Caco-2 (cell line): ENCODE measurements at regions of chr10 and their contacts with region 1.

Region 1: DNA sequence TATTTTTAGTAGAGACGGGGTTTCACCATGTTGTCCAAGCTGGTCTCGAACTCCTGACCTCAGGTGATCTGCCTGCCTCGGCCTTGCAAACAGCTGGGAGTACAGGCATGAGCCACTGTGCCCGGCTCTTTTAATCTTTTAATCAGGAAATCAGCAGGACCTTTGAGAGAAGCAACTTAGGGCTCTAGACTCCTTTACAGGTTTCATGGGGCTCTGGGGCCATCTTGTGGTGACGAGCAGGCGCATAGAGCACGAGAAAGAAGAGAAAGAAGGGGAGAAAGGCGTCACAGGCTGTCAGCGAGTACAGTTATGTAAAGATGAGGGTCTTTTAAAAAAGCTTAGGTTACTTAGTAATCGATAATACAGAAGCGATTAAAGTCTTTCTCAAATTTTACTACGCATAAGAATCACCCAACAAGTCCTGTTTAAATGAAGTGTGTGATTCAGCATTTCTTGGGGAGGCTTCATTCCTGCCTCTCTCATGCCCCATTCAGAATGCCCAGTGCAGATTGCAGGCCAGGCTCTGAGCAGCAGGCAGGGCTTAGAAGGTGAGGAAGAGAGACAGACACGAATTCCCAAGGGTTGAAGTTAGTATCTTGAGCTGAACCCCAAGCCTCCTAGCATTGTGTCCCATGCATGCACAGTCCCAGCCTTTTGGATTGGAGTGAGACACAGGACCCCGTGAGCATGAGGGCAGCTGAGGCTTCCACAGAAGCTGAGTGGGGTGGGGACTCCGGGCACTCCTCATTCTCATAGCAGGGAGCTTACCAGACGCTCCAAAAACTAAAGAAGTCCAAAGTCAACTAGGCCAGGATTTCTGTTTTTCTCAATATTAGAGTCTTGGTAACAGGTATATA is 23.6 kb upstream of the PFKP start:
- DNase-seq: peak; percentile 81
- H3K4me3 ChIP-seq: no peak overlapping the region
- H3K4me3 Mint-ChIP-seq: no peak overlapping the region
- H3K27ac Mint-ChIP-seq: no peak overlapping the region
- H3K4me1 ChIP-seq: peaks cover 22% of the 10 kb centered on the region
- H3K4me1 Mint-ChIP-seq: peaks cover 17% of the 10 kb centered on the region
- H3K27me3 ChIP-seq: no peaks in the 10 kb centered on the region
- H3K27me3 Mint-ChIP-seq: peaks cover 2% of the 10 kb centered on the region
- CTCF ChIP-seq: peak; percentile 89 to 95

Region 2: DNA sequence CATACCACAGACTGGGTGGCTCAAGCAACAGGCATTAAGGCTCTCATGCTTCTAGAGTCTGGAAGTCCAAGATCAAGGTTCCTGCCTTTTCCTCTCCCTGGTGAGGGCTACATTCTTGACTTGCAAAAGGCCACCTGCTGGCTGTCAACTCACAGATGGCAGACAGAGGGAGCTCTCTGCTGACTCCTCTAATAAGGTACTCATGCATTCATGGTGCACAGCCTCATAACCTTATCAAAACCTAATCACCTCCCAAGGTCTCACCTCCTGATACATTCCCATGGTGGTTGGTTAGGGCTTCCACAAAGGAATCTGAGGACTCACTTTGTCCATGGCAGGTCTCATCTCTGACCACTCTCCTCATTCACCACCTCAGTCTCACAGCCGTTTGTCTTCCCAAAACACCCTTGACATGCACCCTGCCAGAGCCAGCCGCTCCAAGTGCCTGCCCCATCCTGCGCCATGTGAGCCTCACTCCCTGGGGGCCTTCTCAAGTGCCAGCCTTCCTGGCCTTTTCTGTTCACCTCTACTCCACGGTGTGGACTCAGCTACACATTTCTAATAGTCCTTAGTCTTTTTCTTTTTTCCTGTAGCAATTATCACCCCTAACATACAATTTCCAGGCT is 906.1 kb before region 1 on chr10:
- CTCF ChIA-PET with region 1: no interaction called
- POLR2A ChIA-PET with region 1: no interaction called
- intact Hi-C with region 1: loop called (anchors 2 kb)
- DNase-seq: peak; percentile 40 to 54
- H3K4me3 ChIP-seq: no peak overlapping the region
- H3K4me3 Mint-ChIP-seq: no peak overlapping the region
- H3K27ac Mint-ChIP-seq: no peak overlapping the region
- H3K4me1 ChIP-seq: no peaks in the 10 kb centered on the region
- H3K4me1 Mint-ChIP-seq: no peaks in the 10 kb centered on the region
- H3K27me3 ChIP-seq: no peaks in the 10 kb centered on the region
- H3K27me3 Mint-ChIP-seq: peaks cover 7% of the 10 kb centered on the region
- CTCF ChIP-seq: peak; percentile 63 to 68

Region 3: GRCh38 chr10:2839081-2839725 is 204.5 kb before region 1 on chr10:
- CTCF ChIA-PET with region 1: interaction called, 3 read pairs
- POLR2A ChIA-PET with region 1: no interaction called
- intact Hi-C with region 1: loop called (anchors 1 kb)
- DNase-seq: peak; percentile 66 to 72
- H3K4me3 ChIP-seq: no peak overlapping the region
- H3K4me3 Mint-ChIP-seq: no peak overlapping the region
- H3K27ac Mint-ChIP-seq: no peak overlapping the region
- H3K4me1 ChIP-seq: no peaks in the 10 kb centered on the region
- H3K4me1 Mint-ChIP-seq: no peaks in the 10 kb centered on the region
- H3K27me3 ChIP-seq: no peaks in the 10 kb centered on the region; the same call in 1 of the 2 replicates
- H3K27me3 Mint-ChIP-seq: peaks cover 37% of the 10 kb centered on the region
- CTCF ChIP-seq: peak; percentile 73 to 93

Region 4: DNA sequence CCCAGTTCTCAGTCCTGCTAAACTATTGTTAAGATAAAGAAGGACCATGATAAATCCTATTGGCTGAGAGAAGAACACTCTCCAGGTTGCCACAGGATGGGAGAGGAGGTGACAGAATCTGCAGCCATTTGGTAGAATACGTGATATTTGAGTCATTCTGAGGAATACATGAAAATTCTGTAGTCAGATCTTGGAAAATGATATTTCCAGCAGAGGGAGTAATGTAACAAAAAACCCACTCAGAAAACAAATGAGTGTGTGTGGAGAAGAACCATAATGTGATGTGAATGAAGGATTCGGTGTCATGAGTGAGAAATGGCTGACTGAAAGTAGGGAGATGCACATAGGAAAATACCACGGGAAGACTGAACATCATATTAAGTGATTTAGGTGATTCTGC is 104.9 kb before region 1 on chr10:
- CTCF ChIA-PET with region 1: no interaction called
- POLR2A ChIA-PET with region 1: no interaction called
- intact Hi-C with region 1: loop called (anchors 1 kb)
- DNase-seq: no peak
- H3K4me3 ChIP-seq: no peak overlapping the region
- H3K4me3 Mint-ChIP-seq: no peak overlapping the region
- H3K27ac Mint-ChIP-seq: no peak overlapping the region
- H3K4me1 ChIP-seq: no peaks in the 10 kb centered on the region
- H3K4me1 Mint-ChIP-seq: peaks cover under 1% of the 10 kb centered on the region
- H3K27me3 ChIP-seq: no peaks in the 10 kb centered on the region; the same call in 1 of the 2 replicates
- H3K27me3 Mint-ChIP-seq: peaks cover 40% of the 10 kb centered on the region
- CTCF ChIP-seq: no peak

Region 5: GRCh38 chr10:2992401-2993198 is 51.1 kb before region 1 on chr10:
- CTCF ChIA-PET with region 1: interaction called, 3 read pairs
- POLR2A ChIA-PET with region 1: no interaction called
- intact Hi-C with region 1: loop called (anchors 1 kb)
- DNase-seq: no peak
- H3K4me3 ChIP-seq: no peak overlapping the region
- H3K4me3 Mint-ChIP-seq: no peak overlapping the region
- H3K27ac Mint-ChIP-seq: no peak overlapping the region
- H3K4me1 ChIP-seq: no peaks in the 10 kb centered on the region
- H3K4me1 Mint-ChIP-seq: no peaks in the 10 kb centered on the region
- H3K27me3 ChIP-seq: no peaks in the 10 kb centered on the region
- H3K27me3 Mint-ChIP-seq: peaks cover 4% of the 10 kb centered on the region
- CTCF ChIP-seq: no peak